ENCODE measurements at regions of chr6 and their contacts with region 1.

Region 1: DNA sequence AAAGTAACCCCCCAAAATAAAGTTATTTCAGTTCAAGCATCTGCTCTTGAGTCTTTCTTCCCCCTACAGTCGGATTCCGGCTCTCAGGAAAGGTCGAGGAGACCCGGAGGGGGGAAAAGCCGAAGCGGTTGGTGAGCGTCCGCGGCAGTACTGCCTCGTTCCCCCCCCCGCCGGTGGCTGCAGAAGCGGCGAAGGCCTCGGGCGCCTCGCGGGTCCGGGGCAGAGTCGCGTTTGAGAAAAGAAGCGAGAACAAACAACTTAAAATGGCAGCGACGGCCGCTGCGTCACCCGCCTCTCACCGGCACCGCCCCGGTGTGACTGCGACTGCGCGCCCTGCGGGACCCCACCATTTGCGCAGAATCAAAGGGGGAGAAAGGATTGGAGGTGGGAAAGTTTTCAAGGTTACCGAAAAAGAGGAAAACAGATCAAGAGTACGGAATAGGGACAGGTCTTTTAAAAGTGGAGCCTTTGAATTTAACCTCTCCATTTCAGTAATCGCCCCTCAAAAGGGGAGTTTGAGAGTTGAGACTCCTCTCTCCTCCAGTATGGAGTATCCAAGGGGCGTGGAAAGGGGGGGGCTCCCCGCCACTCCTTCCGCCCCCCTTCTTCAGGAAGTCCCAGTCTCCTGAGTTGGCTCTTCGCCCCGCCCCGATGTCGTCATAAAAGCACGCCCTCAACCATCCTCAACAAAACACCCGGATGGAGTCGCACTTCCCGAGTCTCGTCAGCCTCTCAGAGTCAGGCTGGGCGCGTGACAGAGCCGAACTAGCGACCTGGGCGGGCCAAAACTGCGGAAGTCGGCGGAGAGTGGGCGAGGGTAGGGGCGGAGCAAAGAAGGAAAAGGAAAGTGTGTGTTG is 1.9 kb upstream of the C6orf62 start:
- DNase-seq: peak; percentile 100
- H3K4me3 Mint-ChIP-seq: peak overlapping the region; percentile 99
- H3K27ac Mint-ChIP-seq: peak overlapping the region; percentile 100
- H3K4me1 Mint-ChIP-seq: peaks cover 32% of the 10 kb centered on the region
- H3K27me3 Mint-ChIP-seq: no peaks in the 10 kb centered on the region

Region 2: DNA sequence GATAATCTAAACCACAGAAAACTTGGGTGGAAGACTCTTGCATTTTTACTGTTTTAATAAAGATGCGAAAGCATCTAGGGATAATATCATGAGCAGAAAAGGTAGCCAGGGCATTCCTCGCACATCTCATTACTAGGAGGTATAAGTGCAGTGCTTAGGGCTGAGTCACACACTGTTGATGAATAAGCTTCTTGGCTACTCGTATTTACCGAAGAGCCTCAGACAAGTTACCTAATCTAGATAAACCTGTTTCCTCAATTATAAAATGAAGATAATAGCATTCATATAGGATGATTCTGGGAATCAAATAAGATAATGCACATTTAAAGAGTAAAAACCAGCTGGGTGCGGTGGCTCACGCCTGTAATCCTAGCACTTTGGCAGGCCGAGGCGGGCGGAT is 74.0 kb before region 1 on chr6:
- CTCF ChIA-PET with region 1: no interaction called
- POLR2A ChIA-PET with region 1: interaction called, 10 read pairs
- DNase-seq: no peak
- H3K4me3 Mint-ChIP-seq: peak overlapping the region; percentile 78
- H3K27ac Mint-ChIP-seq: no peak overlapping the region
- H3K4me1 Mint-ChIP-seq: peaks cover 17% of the 10 kb centered on the region
- H3K27me3 Mint-ChIP-seq: peaks cover 23% of the 10 kb centered on the region

Region 3: GRCh38 chr6:24666641-24667377 is 54.0 kb before region 1 on chr6 and contains the starts of genes ACOT13 and TDP2:
- CTCF ChIA-PET with region 1: interaction called, 4 read pairs
- POLR2A ChIA-PET with region 1: interaction called, 34 read pairs
- DNase-seq: peak; percentile 96
- H3K4me3 Mint-ChIP-seq: peak within 1 kb of the TSS; percentile 88
- H3K27ac Mint-ChIP-seq: peak within 1 kb of the TSS; percentile 92
- H3K4me1 Mint-ChIP-seq: peaks cover 48% of the 10 kb centered on the region
- H3K27me3 Mint-ChIP-seq: no peaks in the 10 kb centered on the region
- total RNA-seq, gene ACOT13: 19.9 to 21.1 TPM
- total RNA-seq, gene TDP2: 43.8 to 45.4 TPM

Region 4: DNA sequence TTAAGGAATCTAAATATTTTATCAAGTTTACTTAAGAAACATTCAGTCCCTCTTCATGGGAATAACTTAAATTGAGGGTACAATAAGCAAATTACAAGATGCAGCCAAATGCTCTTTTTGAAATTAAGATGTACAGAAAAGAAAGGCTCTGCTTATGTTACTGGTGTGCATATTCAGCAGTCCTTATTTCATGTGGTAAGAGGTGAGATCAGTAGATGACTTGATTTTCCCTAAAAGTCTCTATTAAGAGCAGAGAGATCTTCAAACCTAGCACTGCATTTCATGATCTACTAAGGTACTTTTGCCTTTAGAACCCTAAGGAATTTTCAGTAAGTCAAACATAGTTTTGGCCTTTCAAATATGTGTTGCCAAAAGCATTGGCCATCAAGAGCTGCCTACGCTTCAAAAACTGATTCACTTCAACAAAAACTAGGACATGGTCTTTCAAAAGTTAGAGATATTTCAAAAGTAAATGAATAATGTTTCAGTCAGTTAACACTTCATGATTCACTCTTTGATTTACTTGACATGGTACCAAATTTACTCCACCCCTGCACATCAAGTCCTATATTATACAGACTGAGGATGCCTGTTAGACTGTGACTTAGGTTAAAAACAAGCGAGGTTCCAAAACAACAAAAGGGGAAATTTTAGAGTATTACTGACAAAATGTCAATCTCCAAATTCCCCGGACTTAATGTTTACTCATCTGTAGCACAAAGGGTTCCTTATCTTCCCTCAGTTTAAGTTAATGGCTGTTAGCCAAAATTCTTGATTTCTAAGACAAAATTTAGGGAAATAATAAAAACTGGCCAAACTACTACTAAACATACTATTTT is 21.1 kb before region 1 on chr6:
- CTCF ChIA-PET with region 1: no interaction called
- POLR2A ChIA-PET with region 1: interaction called, 41 read pairs
- DNase-seq: no peak
- H3K4me3 Mint-ChIP-seq: no peak overlapping the region
- H3K27ac Mint-ChIP-seq: no peak overlapping the region
- H3K4me1 Mint-ChIP-seq: peaks cover 14% of the 10 kb centered on the region
- H3K27me3 Mint-ChIP-seq: no peaks in the 10 kb centered on the region

Region 5: DNA sequence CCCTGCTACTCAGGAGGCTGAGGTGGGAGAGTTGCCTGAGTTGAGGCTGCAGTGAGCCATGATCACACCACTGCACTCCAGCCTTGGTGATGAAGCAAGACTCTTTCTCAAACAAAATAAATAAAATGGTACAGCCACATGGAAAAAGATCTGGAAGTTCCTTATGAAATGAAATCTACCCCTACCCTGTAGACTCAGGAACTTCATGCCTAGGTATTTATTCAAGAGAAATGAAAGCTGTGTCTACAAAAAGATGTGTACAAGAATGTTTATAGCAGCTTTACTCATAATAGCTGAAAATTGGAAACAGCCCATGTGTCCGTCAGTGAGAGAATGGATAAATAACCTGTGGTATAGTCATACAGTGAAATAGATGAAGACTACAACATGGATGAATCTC is 13.3 kb after region 1 on chr6:
- CTCF ChIA-PET with region 1: no interaction called
- POLR2A ChIA-PET with region 1: interaction called, 13 read pairs
- DNase-seq: no peak
- H3K4me3 Mint-ChIP-seq: no peak overlapping the region
- H3K27ac Mint-ChIP-seq: no peak overlapping the region
- H3K4me1 Mint-ChIP-seq: peaks cover 4% of the 10 kb centered on the region
- H3K27me3 Mint-ChIP-seq: peaks cover 9% of the 10 kb centered on the region

Region 6: DNA sequence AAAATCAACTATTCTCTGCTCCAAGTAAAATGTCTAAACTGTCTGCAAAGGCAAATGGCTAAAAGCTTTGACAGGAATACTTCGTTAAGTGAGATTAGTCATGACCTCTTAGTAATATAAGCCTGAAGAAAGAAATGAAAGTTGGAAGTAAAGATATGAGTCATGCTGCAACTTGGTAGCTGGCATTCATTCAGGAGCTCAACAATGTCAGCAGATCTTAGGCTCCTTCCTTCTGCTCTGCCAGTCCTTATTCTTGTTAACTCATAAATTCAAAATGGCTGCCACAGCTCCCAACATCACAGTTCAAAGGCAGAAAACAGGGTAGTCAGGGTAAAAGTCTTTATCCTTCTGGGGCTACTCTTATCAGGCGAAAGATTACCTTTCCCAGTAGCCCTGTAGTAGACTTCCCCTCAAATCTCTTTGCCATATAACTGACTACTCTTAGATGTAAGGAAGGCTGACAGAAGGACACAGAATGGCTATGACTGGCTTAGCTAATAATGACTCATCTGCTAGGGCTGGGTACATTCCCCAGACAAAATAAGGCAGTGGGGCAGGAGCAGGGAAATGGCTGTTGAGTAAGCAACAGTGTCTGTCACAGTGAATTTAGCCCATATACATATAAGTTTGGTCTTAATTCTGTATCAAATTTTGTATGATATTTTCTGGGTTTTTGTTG is 22.6 kb after region 1 on chr6:
- CTCF ChIA-PET with region 1: interaction called, 3 read pairs
- POLR2A ChIA-PET with region 1: interaction called, 21 read pairs
- DNase-seq: peak; percentile 22
- H3K4me3 Mint-ChIP-seq: no peak overlapping the region
- H3K27ac Mint-ChIP-seq: peak overlapping the region; percentile 19
- H3K4me1 Mint-ChIP-seq: peaks cover 19% of the 10 kb centered on the region
- H3K27me3 Mint-ChIP-seq: no peaks in the 10 kb centered on the region

Region 7: DNA sequence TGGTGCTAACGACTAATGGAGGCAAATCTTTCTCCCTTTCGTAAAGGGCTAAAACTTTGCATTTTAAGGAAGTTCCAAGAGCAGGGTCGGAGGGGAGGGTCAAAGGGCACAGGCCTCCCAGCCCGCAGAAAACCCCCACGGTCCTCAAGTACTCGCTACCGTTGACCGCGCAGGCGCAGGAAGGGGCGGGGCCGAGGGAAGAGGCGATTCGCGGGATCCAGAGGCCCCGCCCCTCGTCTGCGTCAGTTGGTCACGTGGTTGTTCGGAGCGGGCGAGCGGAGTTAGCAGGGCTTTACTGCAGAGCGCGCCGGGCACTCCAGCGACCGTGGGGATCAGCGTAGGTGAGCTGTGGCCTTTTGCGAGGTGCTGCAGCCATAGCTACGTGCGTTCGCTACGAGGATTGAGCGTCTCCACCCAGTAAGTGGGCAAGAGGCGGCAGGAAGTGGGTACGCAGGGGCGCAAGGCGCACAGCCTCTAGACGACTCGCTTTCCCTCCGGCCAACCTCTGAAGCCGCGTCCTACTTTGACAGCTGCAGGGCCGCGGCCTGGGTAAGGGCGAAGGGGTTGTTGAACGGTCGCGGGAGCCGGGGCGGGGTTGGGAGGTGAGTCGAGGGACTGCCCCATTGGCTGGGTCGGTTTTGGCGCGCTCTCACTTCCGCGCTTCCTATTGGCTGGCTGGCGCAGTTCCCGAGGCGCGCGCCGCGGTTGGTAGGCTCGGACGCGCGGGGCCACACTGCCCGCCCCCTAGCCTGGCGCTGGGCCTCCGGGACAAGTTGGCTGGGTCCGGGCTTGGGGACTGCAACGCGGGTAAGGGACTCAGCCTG is 54.1 kb after region 1 on chr6 and contains the start of gene GMNN:
- CTCF ChIA-PET with region 1: interaction called, 4 read pairs
- POLR2A ChIA-PET with region 1: interaction called, 49 read pairs
- DNase-seq: peak; percentile 98
- H3K4me3 Mint-ChIP-seq: peak within 1 kb of the TSS; percentile 95
- H3K27ac Mint-ChIP-seq: peak within 1 kb of the TSS; percentile 98
- H3K4me1 Mint-ChIP-seq: peaks cover 32% of the 10 kb centered on the region
- H3K27me3 Mint-ChIP-seq: no peaks in the 10 kb centered on the region
- total RNA-seq, gene GMNN: 67.6 to 69.0 TPM

Region 8: DNA sequence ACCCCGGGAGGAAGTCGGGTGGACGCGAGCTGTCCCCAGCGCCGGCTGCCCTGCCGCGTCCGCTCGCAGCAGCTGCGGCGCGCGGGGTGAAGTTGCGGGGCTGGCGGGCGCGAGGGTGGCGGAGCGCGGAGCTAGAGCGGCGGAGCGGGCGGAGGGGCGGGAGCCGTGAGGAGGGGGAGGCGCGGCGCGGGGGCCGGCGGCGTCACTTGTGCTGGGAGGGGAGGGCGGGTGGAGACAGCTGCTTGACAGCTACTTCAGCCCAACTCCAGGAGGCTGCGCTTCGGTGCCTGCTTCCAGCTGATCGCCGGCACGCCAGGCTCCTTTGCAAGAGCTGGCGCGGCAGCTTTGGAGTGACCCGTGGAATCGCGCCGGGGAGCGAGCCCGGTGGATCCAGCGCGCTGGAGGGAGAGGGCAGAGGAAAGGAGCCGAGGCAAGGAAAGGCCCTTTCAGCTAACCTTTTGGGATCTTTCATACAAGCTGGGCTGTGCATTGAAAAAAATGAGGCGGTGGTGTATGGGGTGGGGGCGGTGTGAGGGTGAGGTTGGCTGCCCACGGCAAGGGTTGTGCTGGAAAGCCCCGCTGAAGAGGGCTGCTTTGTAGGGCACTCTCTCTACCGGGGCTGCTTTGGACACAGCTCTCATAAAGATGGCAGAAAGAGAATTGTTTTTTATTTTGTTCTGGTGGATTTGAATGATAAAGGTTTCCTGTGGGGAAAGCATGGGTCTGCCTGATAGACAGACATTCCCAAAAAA is 190.3 kb after region 1 on chr6:
- CTCF ChIA-PET with region 1: no interaction called
- POLR2A ChIA-PET with region 1: no interaction called
- DNase-seq: peak; percentile 46
- H3K4me3 Mint-ChIP-seq: peak overlapping the region; percentile 76
- H3K27ac Mint-ChIP-seq: peak overlapping the region; percentile 79
- H3K4me1 Mint-ChIP-seq: peaks cover 90% of the 10 kb centered on the region
- H3K27me3 Mint-ChIP-seq: no peaks in the 10 kb centered on the region